ENCODE measurements at regions of chr20 and their contacts with region 1.

Region 1: GRCh38 chr20:52601295-52601971 is 370.7 kb upstream of the TSHZ2 start:
- DNase-seq: no peak

Region 2: DNA sequence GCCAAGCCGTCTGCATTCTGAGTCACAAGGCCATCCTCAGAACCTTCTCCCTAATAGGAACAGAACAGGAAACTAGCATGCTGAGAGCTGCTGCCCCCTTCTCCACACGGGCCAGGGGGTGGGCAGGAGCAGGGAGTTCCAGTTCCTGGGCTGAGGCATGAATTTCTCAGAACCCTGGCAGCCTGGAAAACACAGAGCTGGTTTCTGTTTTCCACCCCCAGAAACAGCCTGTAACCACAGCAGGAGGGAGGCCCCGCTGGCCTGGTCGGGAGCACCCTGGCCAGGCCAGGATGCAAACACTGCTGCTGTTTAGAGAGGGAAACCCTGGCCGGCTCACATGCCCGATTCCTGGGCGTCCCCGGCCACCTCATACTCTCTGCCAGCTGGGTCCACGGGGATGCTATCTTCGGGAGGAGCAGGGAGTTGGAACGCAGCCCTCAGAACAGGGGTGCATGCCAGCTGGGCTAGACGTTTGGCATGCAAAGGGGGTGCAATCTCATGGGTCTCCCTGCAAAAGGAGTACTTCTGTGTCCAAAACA is 1189.0 kb before region 1 on chr20:
- intact Hi-C with region 1: loop called in 1 of 2 experiments (anchors 10 kb)
- DNase-seq: no peak

Region 3: GRCh38 chr20:52631469-52631868 is 30.0 kb after region 1 on chr20:
- intact Hi-C with region 1: no loop called
- DNase-seq: no peak

Region 4: GRCh38 chr20:52738081-52738480 is 136.6 kb after region 1 on chr20:
- intact Hi-C with region 1: no loop called
- DNase-seq: no peak

Measured in posterior vena cava (tissue), 2 donors.